ENCODE measurements at regions of chr12 and their contacts with region 1.

Region 1: DNA sequence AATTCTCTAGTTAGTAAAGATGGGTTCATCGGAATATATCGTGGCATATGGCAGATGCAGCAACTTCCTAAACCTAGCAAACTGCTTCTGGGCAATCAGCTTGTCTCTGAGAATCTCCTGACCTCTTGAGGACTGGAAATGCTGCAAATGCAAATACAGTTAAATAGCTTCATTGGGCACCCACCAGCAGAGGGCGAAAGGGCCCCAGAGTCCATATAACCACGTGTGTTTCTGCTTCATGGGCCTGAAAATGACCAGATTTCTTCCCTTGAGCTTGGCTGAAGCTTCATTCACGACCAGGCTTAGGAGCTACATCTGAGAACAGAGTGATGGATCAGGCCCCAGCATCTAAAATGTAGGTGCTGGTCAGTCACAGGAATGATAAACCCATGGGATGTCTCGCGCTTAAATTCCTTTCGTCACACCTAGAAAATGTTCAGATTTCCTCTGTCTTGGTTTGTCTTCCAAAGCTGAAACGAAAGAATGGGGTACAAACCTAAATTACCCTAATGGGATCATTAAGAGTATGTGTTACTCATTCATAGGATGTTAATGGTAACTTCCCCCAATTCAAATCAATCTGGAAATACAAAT is 1482.5 kb upstream of the TMEM132C start:
- DNase-seq: peak; percentile 65
- ATAC-seq: no peak
- H3K4me3 Mint-ChIP-seq: no peak overlapping the region
- H3K27ac Mint-ChIP-seq: no peak overlapping the region
- H3K4me1 Mint-ChIP-seq: peaks cover 3% of the 10 kb centered on the region
- H3K27me3 Mint-ChIP-seq: peaks cover 2% of the 10 kb centered on the region

Region 2: DNA sequence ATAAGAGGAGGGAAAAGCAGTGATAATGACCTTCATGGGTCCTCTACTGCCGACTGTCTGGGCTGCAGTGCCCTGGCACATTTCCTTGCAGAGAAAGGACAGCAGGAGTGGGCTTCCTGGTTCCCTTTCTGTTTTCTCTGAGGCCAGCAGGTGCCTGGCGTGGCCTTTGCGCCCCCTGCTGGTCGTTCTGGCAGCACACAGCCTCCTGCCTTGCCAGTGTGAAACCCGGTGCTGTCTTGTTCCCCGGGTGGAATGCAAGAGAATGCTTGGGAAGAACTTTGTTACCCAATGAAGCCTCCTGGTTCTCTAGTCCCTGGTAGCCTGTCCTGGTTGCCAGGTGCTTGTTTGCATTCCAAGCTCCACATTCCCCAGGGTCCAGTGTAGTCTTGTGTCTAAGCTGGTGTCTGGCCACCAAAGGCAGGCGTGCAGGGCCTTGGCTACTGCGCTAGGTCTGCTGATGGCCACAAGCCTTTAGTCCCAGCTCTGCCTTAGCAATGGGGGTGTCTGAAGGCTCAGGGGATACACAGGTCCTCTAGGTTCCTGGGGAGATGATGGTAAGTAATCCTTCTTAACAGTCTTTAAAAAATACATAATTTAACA is 90.1 kb after region 1 on chr12:
- CTCF ChIA-PET with region 1: interaction called, 5 read pairs
- POLR2A ChIA-PET with region 1: no interaction called
- intact Hi-C with region 1: loop called (anchors 1 kb)
- DNase-seq: peak; percentile 83
- ATAC-seq: peak; percentile 64
- H3K4me3 Mint-ChIP-seq: no peak overlapping the region
- H3K27ac Mint-ChIP-seq: no peak overlapping the region
- H3K4me1 Mint-ChIP-seq: no peaks in the 10 kb centered on the region
- H3K27me3 Mint-ChIP-seq: peaks cover 4% of the 10 kb centered on the region

Region 3: DNA sequence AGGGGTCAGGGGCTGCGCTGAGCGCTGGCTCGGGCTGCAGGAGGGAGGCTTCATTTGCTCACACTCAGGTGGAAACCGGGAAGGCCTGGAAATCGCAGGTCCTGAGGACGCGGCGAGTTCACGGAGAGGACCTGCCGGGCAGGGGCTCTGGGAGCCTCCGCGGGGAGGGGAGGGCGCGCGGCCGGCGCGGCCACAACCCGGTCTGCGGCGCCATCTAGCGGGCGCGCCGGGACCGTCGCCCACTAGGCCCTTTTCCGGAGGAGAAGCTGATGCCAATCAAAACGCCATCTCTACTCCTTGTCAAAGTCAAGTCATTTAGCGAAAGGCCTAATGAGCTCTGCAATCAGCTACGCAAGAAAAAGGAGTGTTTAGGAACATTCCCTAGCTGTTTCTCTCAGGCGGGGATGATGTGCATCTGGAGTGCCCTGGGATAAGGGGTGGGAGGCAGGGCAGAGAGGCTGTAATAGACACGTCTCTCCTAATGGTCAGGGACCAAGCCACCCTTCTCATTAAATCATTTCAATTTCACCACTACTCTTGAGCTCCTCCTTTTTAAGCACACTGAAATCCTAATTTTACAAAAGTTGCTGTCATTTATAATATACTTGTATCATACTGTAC is 596.7 kb after region 1 on chr12:
- CTCF ChIA-PET with region 1: interaction called, 5 read pairs
- POLR2A ChIA-PET with region 1: no interaction called
- intact Hi-C with region 1: loop called in 1 of 2 experiments (anchors 2 kb)
- DNase-seq: peak; percentile 65
- ATAC-seq: peak; percentile 53
- H3K4me3 Mint-ChIP-seq: no peak overlapping the region
- H3K27ac Mint-ChIP-seq: no peak overlapping the region
- H3K4me1 Mint-ChIP-seq: no peaks in the 10 kb centered on the region
- H3K27me3 Mint-ChIP-seq: peaks cover 7% of the 10 kb centered on the region

Measured in activated CD4-positive, alpha-beta T cell treated with anti-CD3 and anti-CD28 coated beads for 36 hours (primary cell).